ENCODE measurements at regions of chr1 and their contacts with region 1.

Region 1: GRCh38 chr1:206952171-206952570 is 5.9 kb upstream of the PIGR start:
- DNase-seq: peak in 1 of 4 experiments; percentile 25
- ATAC-seq: peak; percentile 19; the same call in 1 of the 3 replicates
- H3K4me3 ChIP-seq: no peak overlapping the region
- H3K27ac ChIP-seq: no peak overlapping the region
- H3K4me1 ChIP-seq: peaks cover 6 to 22% of the 10 kb centered on the region in 2 experiments; a peak in 4 of 5 replicates
- H3K27me3 ChIP-seq: no peaks in the 10 kb centered on the region
- CTCF ChIP-seq: no peak
- EP300 ChIP-seq: no peak
- POLR2A ChIP-seq: no peak
- RAD21 ChIP-seq: no peak

Region 2: DNA sequence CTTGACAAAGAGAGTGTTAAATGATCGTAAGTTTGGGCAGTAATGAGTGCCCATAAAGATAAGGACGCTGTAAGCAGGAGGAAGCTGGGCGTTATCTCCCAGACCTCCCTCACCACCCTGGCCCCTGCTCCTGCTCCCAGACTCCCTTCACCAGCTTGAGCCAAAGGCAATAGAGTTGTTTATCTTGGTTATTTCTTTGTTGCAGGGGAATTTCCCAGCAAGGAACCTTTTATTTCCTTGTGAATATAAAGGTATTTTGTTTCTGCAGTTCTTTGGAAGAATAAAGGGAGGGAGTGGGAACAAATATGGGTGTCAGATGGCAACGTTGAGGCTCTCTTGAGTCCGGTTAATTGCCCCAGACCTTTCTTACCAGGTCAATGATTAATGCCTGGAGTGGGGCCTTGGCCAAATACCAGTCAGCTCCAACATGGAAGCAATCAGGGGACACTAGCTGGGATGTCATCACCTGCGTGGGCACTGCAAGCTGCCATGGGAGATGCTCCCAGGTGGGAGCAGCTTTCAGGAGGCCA is 10.2 kb before region 1 on chr1:
- CTCF ChIA-PET with region 1: no interaction called
- POLR2A ChIA-PET with region 1: interaction called, 14 read pairs
- in situ Hi-C with region 1: no loop called
- intact Hi-C with region 1: no loop called
- DNase-seq: peak; percentile 50 to 67 (median 52)
- ATAC-seq: peak; percentile 58
- H3K4me3 ChIP-seq: no peak overlapping the region
- H3K27ac ChIP-seq: no peak overlapping the region
- H3K4me1 ChIP-seq: peaks cover 25 to 42% of the 10 kb centered on the region in 2 experiments
- H3K27me3 ChIP-seq: peaks cover 3 to 4% of the 10 kb centered on the region in 2 experiments; a peak in 2 of 5 replicates
- CTCF ChIP-seq: no peak
- EP300 ChIP-seq: no peak
- POLR2A ChIP-seq: no peak
- RAD21 ChIP-seq: no peak